Activated naive CD4-positive, alpha-beta T cell treated with anti-CD3 and anti-CD28 coated beads for 36 hours (primary cell): ENCODE measurements at regions of chr14 and their contacts with region 1.

Region 1: GRCh38 chr14:55579724-55580469 is at the start of gene KTN1:
- DNase-seq: peak; percentile 84
- H3K4me3 Mint-ChIP-seq: peak within 1 kb of the TSS; percentile 94
- H3K27ac Mint-ChIP-seq: peak within 1 kb of the TSS; percentile 84
- H3K4me1 Mint-ChIP-seq: peaks cover 30% of the 10 kb centered on the region
- H3K27me3 Mint-ChIP-seq: no peaks in the 10 kb centered on the region
- total RNA-seq, gene KTN1: 90.0 to 94.1 TPM

Region 2: DNA sequence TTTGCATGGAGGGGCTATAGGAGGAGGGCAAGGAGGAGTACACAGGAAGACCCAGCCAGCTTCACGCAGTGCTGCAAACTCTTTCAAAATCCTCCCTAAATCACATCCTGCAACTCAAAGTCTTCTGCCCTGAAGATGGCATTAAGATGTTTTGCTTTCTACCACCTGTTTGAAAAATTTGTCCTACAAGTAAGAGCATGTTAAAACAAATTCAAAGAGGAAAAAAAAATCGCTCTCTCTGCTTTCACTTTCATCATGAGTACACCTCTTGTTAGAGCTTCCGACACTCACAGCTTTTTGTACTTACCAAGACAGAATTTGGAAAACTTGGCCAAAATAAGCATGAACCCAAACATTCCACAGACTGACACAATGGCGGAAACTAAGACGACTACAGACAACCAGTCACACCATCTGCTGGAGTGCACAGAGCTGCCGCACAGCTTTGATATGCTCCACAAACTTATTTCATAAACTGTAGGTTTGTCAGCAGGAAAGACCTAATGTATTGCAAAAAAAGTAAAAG is 698.6 kb before region 1 on chr14:
- CTCF ChIA-PET with region 1: no interaction called
- intact Hi-C with region 1: loop called (anchors 10 kb)
- DNase-seq: peak; percentile 38
- H3K4me3 Mint-ChIP-seq: peak overlapping the region; percentile 78
- H3K27ac Mint-ChIP-seq: peak overlapping the region; percentile 96
- H3K4me1 Mint-ChIP-seq: peaks cover 34% of the 10 kb centered on the region
- H3K27me3 Mint-ChIP-seq: no peaks in the 10 kb centered on the region

Region 3: GRCh38 chr14:55102141-55102621 is 477.7 kb before region 1 on chr14:
- CTCF ChIA-PET with region 1: no interaction called
- intact Hi-C with region 1: loop called (anchors 5 kb)
- DNase-seq: peak; percentile 70
- H3K4me3 Mint-ChIP-seq: no peak overlapping the region
- H3K27ac Mint-ChIP-seq: no peak overlapping the region
- H3K4me1 Mint-ChIP-seq: peaks cover 38% of the 10 kb centered on the region
- H3K27me3 Mint-ChIP-seq: no peaks in the 10 kb centered on the region

Region 4: DNA sequence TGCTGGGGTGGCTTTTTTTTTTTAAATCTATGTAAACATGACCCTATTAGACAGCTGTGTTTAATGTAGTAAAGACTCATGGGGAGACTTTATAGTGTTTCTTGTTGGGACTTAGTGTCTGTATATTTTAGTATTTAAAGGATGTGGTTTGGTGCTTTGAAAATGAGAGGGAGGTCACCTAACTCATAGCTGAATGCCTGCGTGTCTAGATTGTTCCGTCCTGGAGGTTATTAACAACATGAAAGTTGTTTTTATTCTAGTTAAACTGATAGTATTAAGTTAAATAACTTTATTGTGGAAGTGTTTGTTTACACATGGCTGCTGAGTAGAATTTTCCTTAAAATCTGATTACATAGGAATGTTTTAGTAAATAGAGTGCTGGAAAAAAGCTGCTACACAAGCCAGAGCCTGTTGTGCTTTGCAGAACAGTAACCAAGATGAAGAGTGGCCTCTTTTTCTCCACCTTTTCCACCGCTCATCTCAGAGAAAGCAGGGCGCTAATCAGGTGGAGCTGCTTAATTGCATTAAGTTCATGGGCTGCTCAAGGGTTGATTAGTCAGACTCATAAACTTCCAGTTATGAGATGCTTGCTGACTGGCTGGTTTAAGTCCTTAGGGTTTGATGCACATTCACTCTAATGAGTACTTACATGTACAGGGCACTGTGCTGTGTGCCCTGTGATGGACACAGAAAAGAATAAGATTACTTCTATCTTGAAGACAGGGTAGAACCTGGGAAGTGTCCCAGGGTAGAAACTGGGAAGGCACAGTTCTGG is 246.0 kb before region 1 on chr14:
- CTCF ChIA-PET with region 1: no interaction called
- intact Hi-C with region 1: loop called (anchors 5 kb)
- DNase-seq: peak; percentile 21
- H3K4me3 Mint-ChIP-seq: peak overlapping the region; percentile 10
- H3K27ac Mint-ChIP-seq: peak overlapping the region; percentile 78
- H3K4me1 Mint-ChIP-seq: peaks cover 82% of the 10 kb centered on the region
- H3K27me3 Mint-ChIP-seq: no peaks in the 10 kb centered on the region

Region 5: DNA sequence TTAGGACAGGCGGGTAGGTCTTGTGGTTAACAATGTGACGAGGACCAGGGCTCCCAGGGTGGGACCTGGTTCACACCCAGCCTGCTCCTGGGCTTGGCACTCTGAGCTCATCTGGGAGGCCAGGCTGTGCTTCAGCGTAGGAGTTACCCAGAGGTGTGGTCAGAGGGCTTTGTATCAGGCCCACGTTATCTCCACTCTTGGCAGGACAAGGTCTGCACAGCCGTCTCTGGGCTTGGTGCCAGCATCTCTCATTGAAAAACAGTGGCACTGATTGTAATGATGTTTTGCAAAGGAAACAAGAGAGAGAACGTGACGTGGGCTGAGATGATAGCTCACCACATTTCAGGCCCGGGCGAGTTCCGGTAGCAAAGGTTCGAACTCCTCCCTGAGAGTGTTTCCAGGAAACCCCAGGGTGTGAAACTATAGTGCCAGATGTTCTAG is 227.2 kb after region 1 on chr14:
- CTCF ChIA-PET with region 1: no interaction called
- intact Hi-C with region 1: loop called (anchors 5 kb)
- DNase-seq: peak; percentile 87
- H3K4me3 Mint-ChIP-seq: no peak overlapping the region
- H3K27ac Mint-ChIP-seq: peak overlapping the region; percentile 75
- H3K4me1 Mint-ChIP-seq: peaks cover 37% of the 10 kb centered on the region
- H3K27me3 Mint-ChIP-seq: no peaks in the 10 kb centered on the region

Region 6: GRCh38 chr14:56008150-56008549 is 428.3 kb after region 1 on chr14:
- CTCF ChIA-PET with region 1: no interaction called
- intact Hi-C with region 1: no loop called
- DNase-seq: no peak
- H3K4me3 Mint-ChIP-seq: no peak overlapping the region
- H3K27ac Mint-ChIP-seq: no peak overlapping the region
- H3K4me1 Mint-ChIP-seq: peaks cover 23% of the 10 kb centered on the region
- H3K27me3 Mint-ChIP-seq: peaks cover 59% of the 10 kb centered on the region

Region 7: DNA sequence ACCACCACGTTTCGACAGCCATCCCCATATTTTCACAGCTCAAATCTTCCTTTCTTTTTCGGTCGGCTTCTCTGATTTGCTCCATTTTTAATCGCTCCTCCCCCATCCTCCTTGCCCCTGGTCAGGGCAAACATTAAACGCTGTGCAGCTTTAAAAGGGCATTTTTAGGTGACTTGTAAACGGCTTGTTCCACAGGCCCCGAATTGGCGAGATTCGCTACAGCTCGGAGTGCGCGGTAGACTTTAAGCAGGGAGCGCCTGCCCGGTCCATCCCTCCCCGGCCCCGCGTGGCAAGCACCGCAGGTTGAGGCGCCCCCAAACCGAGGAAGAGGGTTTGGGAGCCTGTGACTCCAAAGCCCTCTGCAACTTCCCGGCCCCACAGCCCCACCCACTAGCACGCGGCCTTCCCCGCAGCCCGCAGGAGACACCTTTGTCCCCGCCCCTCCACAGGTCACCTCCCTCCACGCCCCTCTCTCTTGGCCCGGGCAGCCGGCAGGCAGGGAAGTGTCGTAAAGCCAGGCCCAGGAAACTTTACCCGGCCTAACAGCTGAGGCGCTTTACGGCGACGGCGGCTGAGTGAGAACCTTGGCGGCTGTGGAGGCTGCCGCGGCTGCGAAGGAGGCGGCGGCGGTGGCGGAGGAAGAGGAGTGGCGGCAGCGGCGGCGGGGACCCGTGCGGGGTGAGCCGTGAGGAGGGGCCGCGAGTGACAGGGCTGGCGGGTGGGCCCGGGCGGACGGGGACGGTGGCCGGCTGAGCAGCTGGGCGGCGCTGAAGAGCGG is 1810.3 kb after region 1 on chr14 and contains the start of gene NAA30:
- CTCF ChIA-PET with region 1: no interaction called
- intact Hi-C with region 1: loop called (anchors 5 kb)
- DNase-seq: peak; percentile 95
- H3K4me3 Mint-ChIP-seq: peak within 1 kb of the TSS; percentile 89
- H3K27ac Mint-ChIP-seq: peak within 1 kb of the TSS; percentile 93
- H3K4me1 Mint-ChIP-seq: peaks cover 35% of the 10 kb centered on the region
- H3K27me3 Mint-ChIP-seq: no peaks in the 10 kb centered on the region
- total RNA-seq, gene NAA30: 12.3 to 12.5 TPM